Natural killer cell (primary cell): ENCODE measurements at regions of chr16 and their contacts with region 1.

Region 1: DNA sequence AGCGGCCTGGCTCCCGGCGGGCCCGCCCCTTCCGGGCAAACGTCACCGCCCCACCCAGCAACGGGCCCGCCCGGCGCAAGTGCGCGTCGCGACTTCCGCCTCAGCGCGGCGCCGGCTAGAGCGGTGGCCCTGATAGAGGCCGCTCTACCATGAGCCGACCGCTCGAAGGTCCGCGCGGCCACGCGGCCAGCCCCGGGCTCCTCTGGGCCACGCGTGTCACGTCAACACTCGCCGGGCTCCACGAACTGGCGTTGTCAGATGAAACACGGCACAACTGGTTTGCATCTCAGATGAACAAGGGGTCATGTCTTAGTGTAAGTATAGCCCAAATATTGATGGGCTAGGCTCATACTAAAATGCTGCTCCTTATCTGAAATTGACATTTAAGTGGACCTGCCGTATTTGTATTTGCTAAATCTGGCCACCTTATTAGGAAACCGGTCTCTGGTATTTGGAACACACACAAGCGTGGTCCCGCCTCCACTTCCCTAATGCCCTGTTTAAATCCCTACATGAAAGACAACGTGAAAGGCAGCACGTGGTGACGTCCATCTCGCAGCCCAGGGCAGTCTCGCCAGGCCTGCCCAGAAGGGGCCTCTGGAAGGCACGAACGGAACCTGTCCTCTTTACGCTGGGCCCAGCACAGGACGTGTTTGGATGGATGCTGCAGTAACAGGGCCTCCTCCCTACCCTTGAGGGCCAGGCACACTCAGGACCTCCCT is at the start of gene ZNF598:
- DNase-seq: peak; percentile 84 to 93
- ATAC-seq: peak; percentile 94 to 99 (median 98)
- H3K4me3 ChIP-seq: peak within 1 kb of the TSS; percentile 82
- H3K4me3 Mint-ChIP-seq: peak within 1 kb of the TSS; percentile 87
- H3K27ac ChIP-seq: peak within 1 kb of the TSS; percentile 98
- H3K27ac Mint-ChIP-seq: peak within 1 kb of the TSS; percentile 93 to 94
- H3K4me1 ChIP-seq: peaks cover 50% of the 10 kb centered on the region
- H3K4me1 Mint-ChIP-seq: peaks cover 28 to 45% of the 10 kb centered on the region in 2 donors
- H3K27me3 ChIP-seq: no peaks in the 10 kb centered on the region
- H3K27me3 Mint-ChIP-seq: no peaks in the 10 kb centered on the region
- CTCF ChIP-seq: no peak
- total RNA-seq, gene ZNF598: 56.1 to 71.6 (median 58.2) TPM

Region 2: DNA sequence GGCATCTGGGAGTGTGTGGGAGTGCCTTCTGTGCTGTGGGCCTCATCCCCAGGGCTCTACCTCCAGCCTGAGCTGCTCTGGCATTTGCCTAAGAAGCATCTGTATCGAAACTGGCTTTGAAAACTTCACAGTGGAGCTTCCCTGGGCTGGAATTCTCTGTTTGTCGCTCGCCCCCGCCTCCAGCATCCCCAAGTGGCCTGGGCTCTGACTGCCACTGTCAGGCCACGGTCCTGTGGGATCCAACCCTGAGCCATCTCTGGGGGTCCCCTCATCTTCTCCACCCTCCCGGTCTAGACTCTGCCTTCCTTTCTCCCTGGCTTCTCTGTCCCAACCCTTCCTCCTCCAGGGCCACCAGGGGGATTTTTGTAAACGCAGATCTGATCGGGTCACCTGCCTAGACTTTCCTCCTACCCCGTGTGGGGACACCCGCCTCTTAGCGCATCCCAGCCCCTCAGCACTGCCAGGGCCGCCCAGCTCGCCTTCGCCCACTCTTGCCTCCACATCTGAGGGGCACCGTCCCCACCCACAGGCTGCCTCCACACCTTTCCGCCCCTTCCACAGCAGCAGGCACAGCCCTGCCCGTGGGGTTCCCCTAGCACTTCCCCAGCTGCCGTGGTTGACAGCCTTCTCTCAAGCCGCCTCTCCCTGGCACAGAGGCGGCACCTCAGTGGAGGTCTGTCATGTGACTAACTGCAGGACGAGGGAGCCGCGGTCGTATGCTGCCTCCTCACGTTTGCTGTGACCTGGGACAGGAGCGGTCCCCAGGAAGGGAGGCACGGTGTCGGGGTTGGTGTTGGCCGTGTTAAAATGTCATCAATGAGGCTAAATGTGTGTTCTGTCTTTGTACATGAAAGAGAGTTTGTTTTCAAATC is 476.9 kb after region 1 on chr16:
- intact Hi-C with region 1: loop called (anchors 10 kb)
- DNase-seq: peak; percentile 72 to 92
- ATAC-seq: peak; percentile 92 to 96 (median 92)
- H3K4me3 ChIP-seq: no peak overlapping the region
- H3K4me3 Mint-ChIP-seq: peak overlapping the region; percentile 71
- H3K27ac ChIP-seq: peak overlapping the region; percentile 55
- H3K27ac Mint-ChIP-seq: peak overlapping the region; percentile 80 to 100
- H3K4me1 ChIP-seq: peaks cover 37% of the 10 kb centered on the region
- H3K4me1 Mint-ChIP-seq: peaks cover 15 to 36% of the 10 kb centered on the region in 2 donors
- H3K27me3 ChIP-seq: no peaks in the 10 kb centered on the region
- H3K27me3 Mint-ChIP-seq: peaks cover 0 to 3% of the 10 kb centered on the region in 2 donors
- CTCF ChIP-seq: peak; percentile 55

Region 3: DNA sequence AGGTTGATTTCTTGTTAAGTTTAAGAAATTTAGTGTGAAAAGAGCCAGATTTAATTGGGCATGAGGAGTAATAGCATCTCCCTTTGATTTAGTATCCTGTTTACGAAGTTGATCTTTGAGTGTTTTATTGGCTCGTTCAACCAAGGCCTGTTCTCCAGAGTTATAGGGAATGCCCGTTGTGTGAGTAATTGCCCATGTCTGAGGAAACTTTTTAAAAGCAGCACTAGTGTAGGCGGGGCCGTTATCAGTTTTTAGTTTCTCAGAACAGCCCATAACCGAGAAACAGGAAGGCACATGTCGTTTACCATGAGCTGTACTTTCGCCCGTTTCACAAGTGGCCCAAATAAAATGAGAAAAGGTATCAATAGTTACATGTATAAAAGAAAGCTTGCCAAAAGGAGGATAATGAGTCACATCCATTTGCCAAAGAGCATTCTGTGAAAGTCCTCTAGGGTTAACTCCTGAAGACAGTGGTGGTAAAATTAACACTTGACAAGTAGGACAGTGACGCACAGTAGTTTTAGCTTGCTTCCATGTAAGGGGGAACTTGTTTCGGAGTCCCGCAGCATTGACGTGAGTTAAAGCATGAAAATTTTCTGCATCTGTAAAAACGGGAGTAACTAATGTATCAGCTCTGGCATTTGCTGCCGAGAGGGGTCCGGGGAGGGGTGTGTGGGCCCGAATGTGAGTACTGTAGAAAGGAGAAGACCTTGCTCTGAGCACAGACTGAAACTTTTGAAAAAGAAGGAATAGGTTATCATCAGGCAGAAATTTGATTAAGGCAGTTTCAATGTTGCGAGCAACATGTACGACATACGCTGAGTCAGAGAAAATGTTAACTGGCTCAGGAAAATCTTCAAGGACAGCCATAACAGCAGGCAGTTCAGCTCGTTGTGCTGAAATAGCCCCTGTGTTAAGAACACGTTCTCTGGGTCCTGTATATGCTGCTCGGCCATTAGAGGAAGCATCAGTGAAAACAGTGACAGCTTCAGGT is 653.9 kb after region 1 on chr16:
- intact Hi-C with region 1: loop called (anchors 10 kb)
- DNase-seq: peak in 1 of 2 donors; percentile 57
- ATAC-seq: peak in 2 of 3 donors; percentile 84 to 85
- H3K4me3 ChIP-seq: no peak overlapping the region
- H3K4me3 Mint-ChIP-seq: no peak overlapping the region
- H3K27ac ChIP-seq: peak overlapping the region; percentile 11
- H3K27ac Mint-ChIP-seq: peak overlapping the region in 1 of 2 donors; percentile 93
- H3K4me1 ChIP-seq: peaks cover 3% of the 10 kb centered on the region
- H3K4me1 Mint-ChIP-seq: peaks cover 11 to 25% of the 10 kb centered on the region in 2 donors
- H3K27me3 ChIP-seq: no peaks in the 10 kb centered on the region
- H3K27me3 Mint-ChIP-seq: no peaks in the 10 kb centered on the region
- CTCF ChIP-seq: no peak